Right ventricle myocardium inferior (tissue), 1 donor: ENCODE measurements at regions of chrX and their contacts with region 1.

Region 1: GRCh38 chrX:13487731-13488523 is 81.5 kb upstream of the EGFL6 start:
- DNase-seq: no peak
- ATAC-seq: peak; percentile 86

Region 2: DNA sequence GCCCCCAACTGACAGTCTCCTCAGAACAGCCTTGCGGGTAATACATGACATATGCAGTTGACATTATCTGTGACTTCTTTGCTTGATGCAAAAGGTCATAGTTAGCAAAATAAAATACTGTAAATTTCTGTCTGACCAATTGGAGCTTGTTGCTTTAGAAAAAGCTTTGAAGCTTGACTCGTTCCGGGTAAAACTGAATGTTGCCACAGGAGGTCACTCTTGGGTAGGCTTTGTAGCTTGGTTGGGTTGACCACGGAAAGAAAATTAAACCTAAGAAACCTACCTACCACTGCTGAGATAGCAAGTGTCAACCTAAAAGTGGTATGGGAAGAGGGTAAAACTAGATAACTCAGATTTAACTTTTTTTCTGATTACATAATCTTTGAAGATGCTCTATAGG is 673.5 kb before region 1 on chrX:
- intact Hi-C with region 1: loop called (anchors 5 kb)
- DNase-seq: no peak
- ATAC-seq: no peak

Region 3: GRCh38 chrX:12946838-12947544 is 540.9 kb before region 1 on chrX:
- intact Hi-C with region 1: loop called (anchors 2 kb)
- DNase-seq: peak; percentile 43
- ATAC-seq: peak; percentile 72

Region 4: GRCh38 chrX:13254076-13254785 is 233.7 kb before region 1 on chrX:
- intact Hi-C with region 1: loop called (anchors 5 kb)
- DNase-seq: no peak
- ATAC-seq: peak; percentile 32